A549 (cell line): ENCODE measurements at regions of chr5 and their contacts with region 1.

Region 1: DNA sequence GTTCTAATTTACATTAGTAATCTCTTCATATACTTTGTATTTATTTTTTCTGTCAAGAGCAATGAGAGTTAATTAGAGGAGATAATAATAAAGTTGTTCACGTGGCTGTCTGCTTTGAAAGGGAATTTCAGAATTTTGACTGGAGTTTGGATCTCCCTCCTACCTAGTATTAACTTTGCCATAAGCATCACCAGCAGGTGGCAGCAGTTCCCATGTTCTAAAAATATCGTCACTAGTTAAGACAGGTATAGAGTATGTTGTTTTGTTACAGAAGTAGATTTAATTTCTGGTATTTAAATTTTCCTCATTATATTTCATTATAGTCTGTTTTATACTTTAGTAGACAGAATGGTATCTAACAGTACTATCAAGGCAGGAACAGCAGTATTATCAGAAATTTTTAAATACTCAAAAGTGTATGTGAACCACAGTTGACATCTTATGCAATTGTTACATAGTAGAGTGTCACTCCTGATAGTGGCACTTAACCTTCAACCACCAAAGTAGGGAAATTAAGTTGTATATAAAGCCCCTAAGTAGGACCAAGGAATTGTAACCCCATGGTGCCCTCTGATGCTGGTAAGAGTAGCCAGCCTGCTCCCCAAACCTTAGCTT is 20.4 kb downstream of the GNPDA1 start:
- DNase-seq: peak; percentile 64
- ATAC-seq: peak; percentile 74 to 93; a peak in 4 of 6 replicates
- H3K4me3 ChIP-seq: no peak overlapping the region
- H3K27ac ChIP-seq: no peak overlapping the region
- H3K4me1 ChIP-seq: no peaks in the 10 kb centered on the region
- CTCF ChIP-seq: peak; percentile 84
- EP300 ChIP-seq: no peak
- POLR2A ChIP-seq: no peak
- RAD21 ChIP-seq: peak; percentile 62 to 64

Region 2: GRCh38 chr5:141672071-141672847 is 320.2 kb before region 1 on chr5:
- CTCF ChIA-PET with region 1: no interaction called
- POLR2A ChIA-PET with region 1: no interaction called
- DNase-seq: no peak
- ATAC-seq: no peak
- H3K4me3 ChIP-seq: no peak overlapping the region
- H3K27ac ChIP-seq: no peak overlapping the region
- H3K4me1 ChIP-seq: no peaks in the 10 kb centered on the region
- CTCF ChIP-seq: no peak
- EP300 ChIP-seq: no peak
- POLR2A ChIP-seq: no peak
- RAD21 ChIP-seq: no peak

Region 3: GRCh38 chr5:142145106-142145900 is 152.8 kb after region 1 on chr5:
- CTCF ChIA-PET with region 1: interaction called, 23 read pairs
- POLR2A ChIA-PET with region 1: no interaction called
- DNase-seq: peak; percentile 57 to 73
- ATAC-seq: peak; percentile 93 to 97
- H3K4me3 ChIP-seq: no peak overlapping the region
- H3K27ac ChIP-seq: no peak overlapping the region
- H3K4me1 ChIP-seq: no peaks in the 10 kb centered on the region
- CTCF ChIP-seq: peak; percentile 72
- EP300 ChIP-seq: no peak
- POLR2A ChIP-seq: no peak
- RAD21 ChIP-seq: peak; percentile 35 to 59; a peak in 3 of 5 replicates

Region 4: GRCh38 chr5:142977363-142978051 is 985.1 kb after region 1 on chr5:
- CTCF ChIA-PET with region 1: no interaction called
- POLR2A ChIA-PET with region 1: no interaction called
- DNase-seq: no peak
- ATAC-seq: no peak
- H3K4me3 ChIP-seq: no peak overlapping the region
- H3K27ac ChIP-seq: no peak overlapping the region
- H3K4me1 ChIP-seq: peaks cover 19% of the 10 kb centered on the region
- CTCF ChIP-seq: no peak
- EP300 ChIP-seq: no peak
- POLR2A ChIP-seq: no peak
- RAD21 ChIP-seq: no peak